ENCODE measurements at regions of chr3 and their contacts with region 1.

Region 1: GRCh38 chr3:177197041-177197727 is at the start of gene TBL1XR1:
- DNase-seq: peak; percentile 93 to 96 (median 96)
- ATAC-seq: peak; percentile 86 to 89
- H3K4me3 ChIP-seq: peak within 1 kb of the TSS; percentile 100
- H3K27ac ChIP-seq: peak within 1 kb of the TSS; percentile 99
- H3K4me1 ChIP-seq: no peaks in the 10 kb centered on the region
- H3K27me3 ChIP-seq: no peaks in the 10 kb centered on the region
- total RNA-seq, gene TBL1XR1: 137 to 145 (median 141) TPM

Region 2: DNA sequence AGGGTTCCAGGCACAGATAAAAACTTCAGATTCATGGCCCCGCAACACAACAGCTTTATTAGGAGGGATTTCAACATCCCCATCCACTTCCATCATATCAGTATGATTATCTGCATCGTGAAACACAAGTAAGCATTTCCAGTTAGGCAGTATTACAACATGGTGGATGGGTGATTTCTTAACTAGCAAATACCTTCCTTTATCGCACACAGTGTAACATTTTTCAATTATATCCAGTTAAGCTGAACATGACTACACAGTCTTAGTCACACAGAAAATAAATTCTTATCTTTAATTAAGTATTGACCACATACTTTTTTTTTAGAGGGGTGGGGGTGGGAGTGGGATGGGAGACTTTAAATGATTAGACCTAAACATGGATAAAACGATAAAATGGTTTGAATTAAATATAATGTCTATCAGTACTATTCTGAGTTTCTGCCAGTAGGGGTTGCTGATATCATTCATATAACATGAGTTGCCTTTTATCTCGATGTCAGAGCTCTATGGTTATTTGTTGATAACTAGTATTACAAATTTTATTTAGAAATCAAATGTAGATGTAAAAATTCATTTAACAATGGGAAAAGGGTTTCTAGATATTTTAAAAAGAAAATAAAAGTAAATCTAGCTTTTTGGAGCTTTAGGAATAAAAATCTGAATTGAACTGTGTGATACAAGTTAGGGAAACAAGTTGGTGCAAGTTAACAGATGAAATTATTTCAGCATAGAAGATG is 146.5 kb before region 1 on chr3:
- intact Hi-C with region 1: loop called in 3 of 4 experiments (anchors 2 to 5 kb)
- DNase-seq: no peak
- ATAC-seq: peak; percentile 57 to 65
- H3K4me3 ChIP-seq: no peak overlapping the region
- H3K27ac ChIP-seq: no peak overlapping the region
- H3K4me1 ChIP-seq: no peaks in the 10 kb centered on the region
- H3K27me3 ChIP-seq: no peaks in the 10 kb centered on the region

Region 3: GRCh38 chr3:177069514-177070329 is 127.5 kb before region 1 on chr3:
- intact Hi-C with region 1: loop called in 1 of 4 experiments (anchors 10 kb)
- DNase-seq: no peak
- ATAC-seq: no peak
- H3K4me3 ChIP-seq: no peak overlapping the region
- H3K27ac ChIP-seq: no peak overlapping the region
- H3K4me1 ChIP-seq: peaks cover 3% of the 10 kb centered on the region
- H3K27me3 ChIP-seq: no peaks in the 10 kb centered on the region

Region 4: GRCh38 chr3:177251755-177252154 is 54.6 kb after region 1 on chr3:
- intact Hi-C with region 1: loop called in 1 of 4 experiments (anchors 10 kb)
- DNase-seq: no peak
- ATAC-seq: no peak
- H3K4me3 ChIP-seq: no peak overlapping the region
- H3K27ac ChIP-seq: no peak overlapping the region
- H3K4me1 ChIP-seq: no peaks in the 10 kb centered on the region
- H3K27me3 ChIP-seq: no peaks in the 10 kb centered on the region

Region 5: DNA sequence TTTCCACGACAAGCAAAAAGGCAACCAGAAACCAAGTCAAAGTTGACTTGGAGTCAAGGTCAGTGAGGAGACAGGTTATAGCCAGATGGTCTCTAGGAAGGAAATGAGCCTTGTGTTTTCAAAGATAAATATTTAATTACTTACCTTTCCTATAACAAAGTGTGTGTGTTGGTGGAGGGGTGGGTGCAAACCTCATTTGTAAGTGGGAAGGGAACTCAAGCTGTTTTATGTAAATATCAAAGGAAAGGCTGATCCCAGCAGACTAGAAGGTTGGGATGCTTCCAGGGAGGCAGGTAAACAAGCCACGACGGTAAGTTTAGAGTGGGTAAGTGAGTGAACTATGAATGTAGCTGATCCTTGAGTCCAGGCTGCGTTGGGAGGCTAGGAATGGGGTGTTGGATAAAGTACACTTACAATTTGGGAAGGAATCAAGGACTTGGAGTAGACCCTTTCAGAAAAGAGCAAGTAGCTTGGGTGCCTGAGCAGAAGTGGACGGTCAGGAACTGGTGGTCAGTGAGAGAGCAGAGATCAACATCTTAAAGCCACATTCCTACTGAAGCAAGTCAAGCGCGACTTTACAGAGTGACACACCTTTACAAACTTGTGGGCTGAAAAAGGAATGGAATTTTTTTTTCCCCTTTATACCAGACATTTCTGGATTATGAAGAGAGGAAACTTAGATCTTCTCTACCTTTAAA is 82.1 kb after region 1 on chr3:
- intact Hi-C with region 1: loop called in 1 of 4 experiments (anchors 10 kb)
- DNase-seq: no peak
- ATAC-seq: no peak
- H3K4me3 ChIP-seq: no peak overlapping the region
- H3K27ac ChIP-seq: no peak overlapping the region
- H3K4me1 ChIP-seq: no peaks in the 10 kb centered on the region
- H3K27me3 ChIP-seq: no peaks in the 10 kb centered on the region

Region 6: GRCh38 chr3:177340243-177340830 is 143.2 kb after region 1 on chr3:
- intact Hi-C with region 1: loop called in 1 of 4 experiments (anchors 5 kb)
- DNase-seq: no peak
- ATAC-seq: no peak
- H3K4me3 ChIP-seq: no peak overlapping the region
- H3K27ac ChIP-seq: no peak overlapping the region
- H3K4me1 ChIP-seq: peaks cover 9% of the 10 kb centered on the region
- H3K27me3 ChIP-seq: no peaks in the 10 kb centered on the region

Region 7: GRCh38 chr3:177359593-177360357 is 162.6 kb after region 1 on chr3:
- intact Hi-C with region 1: loop called (anchors 1 to 5 kb)
- DNase-seq: peak; percentile 94 to 98 (median 98)
- ATAC-seq: peak; percentile 90 to 94
- H3K4me3 ChIP-seq: peak overlapping the region; percentile 26
- H3K27ac ChIP-seq: peak overlapping the region; percentile 91
- H3K4me1 ChIP-seq: peaks cover 17% of the 10 kb centered on the region
- H3K27me3 ChIP-seq: no peaks in the 10 kb centered on the region